BJ (cell line): ENCODE measurements at regions of chr10 and their contacts with region 1.

Region 1: GRCh38 chr10:30348378-30348776 is 701 bp downstream of the MTPAP start:
- DNase-seq: no peak
- H3K4me3 ChIP-seq: peak overlapping the region; percentile 70
- H3K27me3 ChIP-seq: no peaks in the 10 kb centered on the region
- CTCF ChIP-seq: no peak

Region 2: GRCh38 chr10:29946953-29947700 is 401.2 kb before region 1 on chr10:
- CTCF ChIA-PET with region 1: no interaction called
- POLR2A ChIA-PET with region 1: interaction called, 15 read pairs
- DNase-seq: peak; percentile 28
- H3K4me3 ChIP-seq: no peak overlapping the region
- H3K27me3 ChIP-seq: peaks cover 16% of the 10 kb centered on the region
- CTCF ChIP-seq: no peak

Region 3: DNA sequence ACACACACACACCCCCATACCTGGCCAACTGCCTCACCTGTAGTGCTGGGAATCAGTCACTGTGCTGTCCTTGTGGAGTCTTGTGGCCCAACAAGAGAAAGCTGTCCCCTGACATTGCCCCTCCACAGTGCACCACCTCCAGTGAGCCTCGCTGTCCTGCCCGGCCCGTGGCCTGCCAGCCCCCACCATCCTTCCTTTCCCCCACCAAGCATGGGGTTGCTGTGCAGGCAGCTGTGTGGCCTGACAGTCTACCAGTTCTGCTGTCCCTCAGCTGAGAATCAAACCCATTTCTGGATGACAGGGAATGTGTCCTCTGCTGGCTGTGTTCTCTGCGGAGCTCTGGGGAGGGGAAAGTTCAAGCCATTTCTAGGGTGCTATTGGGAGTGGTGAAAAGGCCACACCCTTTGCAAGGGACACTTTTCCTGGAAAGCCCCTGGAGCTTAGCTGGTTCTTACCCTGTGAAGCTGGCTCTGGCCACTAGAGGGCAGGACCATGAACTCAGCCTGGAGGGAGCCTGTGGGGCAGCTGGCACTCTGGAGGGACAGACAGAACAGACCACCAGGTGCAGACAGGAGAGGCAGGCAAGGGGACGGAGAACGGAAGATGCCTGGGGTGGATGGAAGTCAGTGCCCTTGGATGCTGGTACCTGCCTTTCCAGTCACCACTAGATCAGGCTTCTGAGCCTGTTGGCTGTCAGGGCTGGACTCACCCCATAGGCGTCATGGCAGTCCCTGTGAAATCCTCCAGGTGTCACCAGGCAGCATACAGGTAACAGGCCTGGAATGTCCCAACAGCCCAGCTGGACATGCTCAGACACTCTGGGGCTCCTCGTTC is 11.2 kb after region 1 on chr10:
- CTCF ChIA-PET with region 1: interaction called, 18 read pairs
- POLR2A ChIA-PET with region 1: no interaction called
- DNase-seq: no peak
- H3K4me3 ChIP-seq: no peak overlapping the region
- H3K27me3 ChIP-seq: 0 out of 2 replicates have a peak, but pooled peaks cover 2% of the 10 kb centered on the region
- CTCF ChIP-seq: peak; percentile 91